Activated T-helper 1 cell treated with anti-CD3 and anti-CD28 coated beads, Interleukin-12 subunit alpha, Interleukin-12 subunit beta, Interleukin-2, Interleukin-4 antibody, amounts not matched to agents 30 ng/mL and 10 ng/mL and 1 ng/mL, durations not matched to agents 14 hours and 24 hours and 36 hours (primary cell): ENCODE measurements at regions of chr13 and their contacts with region 1.

Region 1: DNA sequence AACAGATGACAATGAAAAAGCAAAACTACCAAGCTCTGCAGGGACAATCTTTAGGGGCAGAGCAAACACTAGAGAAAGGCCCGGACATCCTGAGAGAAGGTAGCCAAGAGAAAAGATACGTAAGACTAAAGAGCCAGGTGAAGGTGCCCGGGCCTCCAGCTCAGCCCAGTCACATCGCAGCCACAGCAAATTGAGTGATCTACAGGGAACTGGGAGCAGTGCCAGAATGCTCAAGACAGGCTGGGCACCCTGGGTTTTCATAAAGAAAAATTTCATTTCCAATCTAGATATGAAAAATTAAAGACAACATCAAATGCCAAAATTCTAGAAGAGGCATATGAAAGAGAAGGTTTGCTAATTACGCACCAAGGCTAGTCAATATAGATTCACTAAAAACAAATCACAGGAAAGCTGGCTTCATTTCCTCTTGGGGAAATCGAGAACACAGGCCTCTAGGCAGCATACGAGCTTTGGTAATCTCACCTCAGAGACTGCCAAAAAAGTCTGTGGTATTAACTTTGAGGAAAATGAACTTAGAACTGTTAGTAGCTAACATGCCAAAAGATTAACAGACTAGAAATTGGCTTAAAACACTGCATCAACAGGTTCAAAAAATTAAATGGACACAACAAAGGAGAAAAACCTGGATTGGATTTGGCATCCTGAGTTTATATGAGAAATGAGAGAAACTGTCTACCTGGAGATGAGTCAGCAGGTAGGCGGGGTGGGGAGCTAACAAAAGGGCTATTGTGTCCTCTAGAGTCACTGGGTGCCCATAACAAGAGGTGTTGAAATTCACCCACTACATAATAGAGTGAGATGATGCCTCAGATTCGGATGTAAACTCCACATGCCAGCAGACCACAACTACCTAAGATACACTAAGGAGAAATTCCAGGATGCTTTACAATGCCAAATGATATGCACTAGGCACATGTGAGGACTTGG is 6.6 kb downstream of the ANKRD10 start:
- DNase-seq: no peak
- H3K4me3 Mint-ChIP-seq: no peak overlapping the region
- H3K27ac Mint-ChIP-seq: peak overlapping the region; percentile 74
- H3K4me1 Mint-ChIP-seq: peaks cover 70% of the 10 kb centered on the region
- H3K27me3 Mint-ChIP-seq: no peaks in the 10 kb centered on the region

Region 2: GRCh38 chr13:110893571-110893970 is 14.7 kb before region 1 on chr13:
- intact Hi-C with region 1: loop called (anchors 2 kb)
- DNase-seq: no peak
- H3K4me3 Mint-ChIP-seq: no peak overlapping the region
- H3K27ac Mint-ChIP-seq: no peak overlapping the region
- H3K4me1 Mint-ChIP-seq: peaks cover 8% of the 10 kb centered on the region
- H3K27me3 Mint-ChIP-seq: no peaks in the 10 kb centered on the region